CD8-positive, alpha-beta T cell (primary cell): ENCODE measurements at regions of chr2 and their contacts with region 1.

Region 1: GRCh38 chr2:74507145-74507925 is at the start of gene PCGF1:
- DNase-seq: peak; percentile 98 to 100 (median 99)
- ATAC-seq: peak; percentile 90
- H3K4me3 ChIP-seq: peak within 1 kb of the TSS; percentile 96 to 99
- H3K4me3 Mint-ChIP-seq: peak within 1 kb of the TSS; percentile 99
- H3K27ac ChIP-seq: peak within 1 kb of the TSS; percentile 85 to 100
- H3K27ac Mint-ChIP-seq: peak within 1 kb of the TSS; percentile 99
- H3K4me1 ChIP-seq: peaks cover 32% of the 10 kb centered on the region
- H3K4me1 Mint-ChIP-seq: peaks cover 54% of the 10 kb centered on the region
- H3K27me3 ChIP-seq: peaks cover 13 to 20% of the 10 kb centered on the region in 2 experiments
- H3K27me3 Mint-ChIP-seq: peaks cover 54% of the 10 kb centered on the region
- CTCF ChIP-seq: peak; percentile 3
- total RNA-seq, gene PCGF1: 18.6 to 22.9 TPM

Region 2: DNA sequence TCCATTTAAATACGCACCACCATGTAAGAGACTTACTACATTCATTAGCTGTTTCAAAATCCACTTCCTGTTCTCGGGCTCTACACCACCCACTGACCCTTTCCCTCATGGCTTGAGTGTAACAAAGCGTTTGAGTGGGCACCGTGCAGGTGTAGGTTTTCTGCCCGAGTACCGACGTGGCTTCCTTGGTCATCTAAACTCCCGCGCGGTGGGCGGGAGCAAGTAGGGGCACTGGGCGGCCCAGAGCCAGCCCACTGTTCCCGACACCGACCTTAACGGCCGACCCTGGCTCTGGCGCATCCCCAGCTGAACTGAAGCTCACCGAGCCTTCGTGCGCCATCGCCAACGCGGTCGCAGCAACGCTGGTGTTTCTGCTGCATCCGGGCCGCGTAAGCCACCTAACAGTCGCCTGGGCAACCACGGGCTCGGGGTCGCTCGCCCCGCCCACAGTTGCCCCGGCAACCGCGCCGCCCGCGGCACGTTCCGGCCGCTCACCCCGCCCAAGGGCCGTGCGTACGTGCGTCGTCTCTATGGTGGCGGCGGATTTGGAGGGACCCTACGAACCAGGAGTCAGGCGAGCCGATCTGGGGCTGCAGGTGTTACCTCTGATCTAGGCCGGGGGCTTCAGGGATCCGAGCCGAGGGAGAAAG is 86.0 kb before region 1 on chr2 and contains the starts of genes C2orf81 and WDR54:
- CTCF ChIA-PET with region 1: no interaction called
- POLR2A ChIA-PET with region 1: no interaction called
- intact Hi-C with region 1: loop called in 1 of 2 experiments (anchors 1 kb)
- DNase-seq: peak; percentile 90 to 98 (median 95)
- ATAC-seq: peak; percentile 88
- H3K4me3 ChIP-seq: peak within 1 kb of the TSS; percentile 72 to 92
- H3K4me3 Mint-ChIP-seq: peak within 1 kb of the TSS; percentile 98
- H3K27ac ChIP-seq: peak within 1 kb of the TSS; percentile 96 to 97
- H3K27ac Mint-ChIP-seq: peak within 1 kb of the TSS; percentile 96
- H3K4me1 ChIP-seq: peaks cover 20% of the 10 kb centered on the region
- H3K4me1 Mint-ChIP-seq: peaks cover 17% of the 10 kb centered on the region
- H3K27me3 ChIP-seq: no peaks in the 10 kb centered on the region
- H3K27me3 Mint-ChIP-seq: no peaks in the 10 kb centered on the region
- CTCF ChIP-seq: no peak
- total RNA-seq, gene C2orf81: 0.75 to 1.8 TPM
- total RNA-seq, gene WDR54: 18.4 to 19.8 TPM

Region 3: DNA sequence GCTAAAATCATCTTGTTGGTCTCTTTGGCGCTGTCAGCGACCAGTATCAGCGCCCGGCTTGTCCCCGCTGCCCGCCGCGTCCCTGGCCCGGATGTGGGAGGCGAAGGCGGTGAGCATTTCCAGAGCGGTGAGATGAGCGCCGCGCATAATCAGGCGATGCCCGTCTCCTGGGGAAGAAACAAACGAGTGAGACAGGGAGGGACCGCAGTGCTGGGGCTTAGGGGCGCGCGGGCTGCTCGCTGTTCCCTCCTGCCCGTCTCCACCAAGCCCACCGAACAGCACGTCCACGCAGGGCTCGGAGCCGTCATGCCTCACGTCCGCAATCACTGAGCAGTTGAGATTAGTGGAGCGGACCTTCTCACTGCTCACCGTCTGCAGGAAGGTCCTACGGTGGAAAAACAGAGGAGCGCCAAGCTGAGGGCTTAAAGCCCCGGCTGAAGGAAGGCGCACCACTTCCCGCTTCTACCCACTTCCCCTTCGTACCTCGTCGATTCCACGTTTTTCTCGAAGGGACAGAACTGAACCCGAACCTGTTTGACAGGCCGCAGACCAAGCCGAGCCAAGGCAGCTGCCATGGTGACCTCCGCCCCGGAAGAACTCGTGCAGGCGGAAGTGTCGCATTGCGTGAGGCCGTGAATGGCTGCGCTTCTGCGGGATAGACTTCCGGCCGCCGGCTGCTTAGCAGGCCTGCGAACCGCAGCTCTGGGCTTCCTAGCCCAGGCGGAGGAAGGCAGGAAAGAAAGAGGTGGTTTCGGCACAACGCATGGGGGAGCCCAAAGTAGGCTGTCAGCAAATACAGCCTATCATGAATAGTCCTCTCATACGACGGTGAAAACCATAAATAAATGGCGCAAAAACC is 35.0 kb before region 1 on chr2 and contains the start of gene MRPL53:
- CTCF ChIA-PET with region 1: no interaction called
- POLR2A ChIA-PET with region 1: interaction called, 6 read pairs
- intact Hi-C with region 1: loop called in 1 of 2 experiments (anchors 1 kb)
- DNase-seq: peak; percentile 90 to 99 (median 98)
- ATAC-seq: peak; percentile 89
- H3K4me3 ChIP-seq: peak within 1 kb of the TSS; percentile 69 to 95
- H3K4me3 Mint-ChIP-seq: peak within 1 kb of the TSS; percentile 97
- H3K27ac ChIP-seq: peak within 1 kb of the TSS; percentile 78 to 94
- H3K27ac Mint-ChIP-seq: peak within 1 kb of the TSS; percentile 99
- H3K4me1 ChIP-seq: peaks cover 21% of the 10 kb centered on the region
- H3K4me1 Mint-ChIP-seq: peaks cover 23% of the 10 kb centered on the region
- H3K27me3 ChIP-seq: no peaks in the 10 kb centered on the region
- H3K27me3 Mint-ChIP-seq: no peaks in the 10 kb centered on the region
- CTCF ChIP-seq: no peak
- total RNA-seq, gene MRPL53: 48.6 to 59.0 TPM

Region 4: GRCh38 chr2:74587664-74588277 is 80.4 kb after region 1 on chr2:
- CTCF ChIA-PET with region 1: interaction called, 9 read pairs
- POLR2A ChIA-PET with region 1: interaction called, 3 read pairs
- intact Hi-C with region 1: loop called in 1 of 2 experiments (anchors 5 kb)
- DNase-seq: peak; percentile 36 to 79 (median 58)
- ATAC-seq: peak; percentile 87
- H3K4me3 ChIP-seq: no peak overlapping the region
- H3K4me3 Mint-ChIP-seq: no peak overlapping the region
- H3K27ac ChIP-seq: no peak overlapping the region
- H3K27ac Mint-ChIP-seq: no peak overlapping the region
- H3K4me1 ChIP-seq: no peaks in the 10 kb centered on the region
- H3K4me1 Mint-ChIP-seq: peaks cover 6% of the 10 kb centered on the region
- H3K27me3 ChIP-seq: no peaks in the 10 kb centered on the region
- H3K27me3 Mint-ChIP-seq: peaks cover 8% of the 10 kb centered on the region
- CTCF ChIP-seq: peak; percentile 52

Region 5: DNA sequence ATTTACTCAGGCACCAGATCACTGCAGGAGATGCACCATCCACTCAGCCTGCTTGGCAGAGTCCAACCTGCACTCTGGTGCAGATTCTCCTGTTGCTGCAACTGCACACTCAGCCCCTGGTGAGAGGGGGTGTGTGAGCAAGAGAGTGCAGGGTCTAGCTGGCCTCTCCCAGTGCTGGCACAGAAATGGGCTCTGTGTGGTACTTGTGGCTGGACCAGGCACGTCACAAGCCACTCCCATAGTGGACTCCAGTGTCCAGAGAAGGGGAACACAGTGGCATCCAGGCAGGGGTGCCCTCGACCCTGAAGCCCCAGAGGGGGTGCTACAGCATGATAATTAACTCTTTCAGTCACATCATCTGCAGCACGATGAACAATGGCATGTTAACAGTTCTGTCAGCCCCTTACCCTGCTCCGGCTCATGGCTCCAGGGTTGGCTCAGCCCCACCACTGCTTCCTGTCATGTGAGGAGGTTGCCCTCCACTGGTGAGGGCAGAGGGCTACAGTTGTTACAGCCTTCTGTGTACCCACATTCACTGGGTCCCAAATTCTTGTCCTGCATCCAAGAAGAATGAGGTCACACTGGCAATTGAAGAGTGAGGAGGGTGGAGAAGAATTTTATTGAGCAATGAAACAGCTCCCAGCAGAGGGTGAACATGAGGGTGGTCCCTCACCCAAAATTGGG is 917.7 kb after region 1 on chr2:
- CTCF ChIA-PET with region 1: no interaction called
- POLR2A ChIA-PET with region 1: no interaction called
- intact Hi-C with region 1: no loop called
- DNase-seq: peak in 3 of 9 experiments; percentile 10 to 26 (median 21)
- ATAC-seq: no peak
- H3K4me3 ChIP-seq: no peak overlapping the region
- H3K4me3 Mint-ChIP-seq: no peak overlapping the region
- H3K27ac ChIP-seq: no peak overlapping the region
- H3K27ac Mint-ChIP-seq: no peak overlapping the region
- H3K4me1 ChIP-seq: no peaks in the 10 kb centered on the region
- H3K4me1 Mint-ChIP-seq: no peaks in the 10 kb centered on the region
- H3K27me3 ChIP-seq: no peaks in the 10 kb centered on the region
- H3K27me3 Mint-ChIP-seq: peaks cover 22% of the 10 kb centered on the region
- CTCF ChIP-seq: no peak